ENCODE measurements at regions of chr6 and their contacts with region 1.

Region 1: DNA sequence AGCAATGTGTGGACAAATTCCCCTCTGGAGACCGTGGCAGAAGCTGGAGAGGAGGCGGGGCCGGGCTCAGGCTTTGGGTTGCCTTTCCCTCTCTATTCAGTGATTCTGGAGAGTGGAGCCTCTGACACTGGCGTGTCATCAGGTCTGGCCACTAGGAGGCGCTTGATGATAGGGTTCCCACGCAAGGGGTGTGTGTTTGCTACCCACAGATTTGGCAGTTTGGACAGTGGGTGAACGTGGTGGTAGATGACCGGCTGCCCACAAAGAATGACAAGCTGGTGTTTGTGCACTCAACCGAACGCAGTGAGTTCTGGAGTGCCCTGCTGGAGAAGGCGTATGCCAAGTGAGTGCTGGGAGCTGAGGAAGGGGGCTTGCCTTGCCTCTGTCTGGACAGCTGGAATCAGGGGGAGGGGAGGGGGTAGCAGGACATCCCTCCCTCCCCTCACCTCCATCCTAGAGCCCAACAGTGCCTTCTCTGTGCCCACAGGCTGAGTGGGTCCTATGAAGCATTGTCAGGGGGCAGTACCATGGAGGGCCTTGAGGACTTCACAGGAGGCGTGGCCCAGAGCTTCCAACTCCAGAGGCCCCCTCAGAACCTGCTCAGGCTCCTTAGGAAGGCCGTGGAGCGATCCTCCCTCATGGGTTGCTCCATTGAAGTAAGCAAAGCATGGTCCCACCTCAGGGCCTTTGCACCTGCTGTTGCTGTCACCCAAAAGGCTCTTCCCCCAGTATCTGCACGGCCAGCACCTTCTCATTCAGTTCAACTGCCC is 14.3 kb downstream of the CAPN11 start:
- DNase-seq: no peak
- H3K4me3 ChIP-seq: no peak overlapping the region
- CTCF ChIP-seq: peak; percentile 81

Region 2: GRCh38 chr6:44161997-44162338 is 10.9 kb before region 1 on chr6:
- CTCF ChIA-PET with region 1: interaction called, 49 read pairs
- POLR2A ChIA-PET with region 1: no interaction called
- DNase-seq: no peak
- H3K4me3 ChIP-seq: no peak overlapping the region
- CTCF ChIP-seq: no peak

Region 3: GRCh38 chr6:44192428-44193041 is 19.6 kb after region 1 on chr6:
- CTCF ChIA-PET with region 1: interaction called, 23 read pairs
- POLR2A ChIA-PET with region 1: no interaction called
- DNase-seq: no peak
- H3K4me3 ChIP-seq: no peak overlapping the region
- CTCF ChIP-seq: no peak

Region 4: GRCh38 chr6:44207966-44208365 is 35.0 kb after region 1 on chr6:
- CTCF ChIA-PET with region 1: interaction called, 12 read pairs
- POLR2A ChIA-PET with region 1: no interaction called
- DNase-seq: no peak
- H3K4me3 ChIP-seq: no peak overlapping the region
- CTCF ChIP-seq: no peak

Region 5: DNA sequence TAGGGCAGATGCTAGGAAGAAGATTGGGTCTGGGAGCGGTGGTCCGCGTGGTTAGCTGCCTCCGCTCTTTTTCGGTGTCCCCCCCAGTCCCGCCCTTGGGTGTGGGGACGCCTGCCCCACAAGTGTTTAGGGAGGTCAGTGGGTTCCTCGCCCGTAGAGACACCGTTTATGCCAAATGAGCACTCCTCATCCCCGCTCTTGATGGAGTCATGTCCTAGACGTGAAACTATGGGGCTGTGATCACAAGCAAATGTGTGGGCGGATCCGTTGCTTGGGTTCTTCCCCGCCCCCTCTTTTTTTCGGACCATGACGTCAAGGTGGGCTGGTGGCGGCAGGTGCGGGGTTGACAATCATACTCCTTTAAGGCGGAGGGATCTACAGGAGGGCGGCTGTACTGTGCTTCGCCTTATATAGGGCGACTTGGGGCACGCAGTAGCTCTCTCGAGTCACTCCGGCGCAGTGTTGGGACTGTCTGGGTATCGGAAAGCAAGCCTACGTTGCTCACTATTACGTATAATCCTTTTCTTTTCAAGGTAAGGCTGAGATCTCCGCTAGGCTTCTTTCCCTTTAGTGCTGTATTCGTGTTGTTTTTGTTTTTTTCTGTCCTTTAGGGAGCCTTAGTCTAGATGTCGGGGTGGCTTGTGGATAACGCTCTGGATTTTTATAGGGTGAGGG is 73.9 kb after region 1 on chr6 and contains the start of gene HSP90AB1:
- CTCF ChIA-PET with region 1: interaction called, 10 read pairs
- POLR2A ChIA-PET with region 1: interaction called, 6 read pairs
- DNase-seq: peak; percentile 96
- H3K4me3 ChIP-seq: peak within 1 kb of the TSS; percentile 99
- CTCF ChIP-seq: no peak

Region 6: DNA sequence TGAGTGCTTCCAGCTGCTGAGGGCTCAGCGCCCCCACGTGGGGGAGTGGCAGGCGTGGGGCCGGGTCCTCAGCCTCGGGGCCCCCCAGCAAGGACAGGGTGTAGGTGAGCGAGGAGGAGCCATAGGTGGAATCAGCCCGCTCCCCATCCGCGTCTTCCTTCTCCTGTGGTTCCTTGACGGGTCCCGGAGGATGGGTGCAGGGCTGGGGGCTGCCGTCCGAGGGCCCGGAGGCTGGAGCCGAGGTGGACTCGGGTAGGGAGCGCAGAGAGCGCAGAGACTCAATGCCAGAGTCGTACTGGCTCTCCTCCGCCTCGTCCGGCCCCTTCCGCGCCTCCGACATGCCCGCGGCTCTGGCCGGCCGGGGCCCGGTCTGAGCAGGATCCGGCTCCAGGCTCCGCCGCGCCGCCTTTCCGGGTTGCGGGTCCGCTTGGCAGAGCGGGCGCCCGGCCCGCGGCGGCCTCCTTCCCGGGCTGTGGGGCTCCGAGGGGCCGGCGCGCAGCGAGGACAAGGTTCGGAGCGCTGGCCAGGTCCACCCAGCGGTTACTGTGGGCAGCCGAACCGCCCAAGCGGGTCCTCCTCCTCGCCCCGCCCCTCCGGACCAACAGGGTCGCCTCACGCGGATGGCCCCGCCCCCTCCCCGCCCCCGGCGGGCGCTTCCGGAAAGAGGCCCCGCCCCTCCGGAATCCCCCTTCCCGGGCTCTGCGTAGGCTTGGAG is 92.2 kb after region 1 on chr6 and contains the start of gene NFKBIE:
- CTCF ChIA-PET with region 1: interaction called, 14 read pairs
- POLR2A ChIA-PET with region 1: no interaction called
- DNase-seq: peak; percentile 50
- H3K4me3 ChIP-seq: peak within 1 kb of the TSS; percentile 80
- CTCF ChIP-seq: peak; percentile 26

Region 7: DNA sequence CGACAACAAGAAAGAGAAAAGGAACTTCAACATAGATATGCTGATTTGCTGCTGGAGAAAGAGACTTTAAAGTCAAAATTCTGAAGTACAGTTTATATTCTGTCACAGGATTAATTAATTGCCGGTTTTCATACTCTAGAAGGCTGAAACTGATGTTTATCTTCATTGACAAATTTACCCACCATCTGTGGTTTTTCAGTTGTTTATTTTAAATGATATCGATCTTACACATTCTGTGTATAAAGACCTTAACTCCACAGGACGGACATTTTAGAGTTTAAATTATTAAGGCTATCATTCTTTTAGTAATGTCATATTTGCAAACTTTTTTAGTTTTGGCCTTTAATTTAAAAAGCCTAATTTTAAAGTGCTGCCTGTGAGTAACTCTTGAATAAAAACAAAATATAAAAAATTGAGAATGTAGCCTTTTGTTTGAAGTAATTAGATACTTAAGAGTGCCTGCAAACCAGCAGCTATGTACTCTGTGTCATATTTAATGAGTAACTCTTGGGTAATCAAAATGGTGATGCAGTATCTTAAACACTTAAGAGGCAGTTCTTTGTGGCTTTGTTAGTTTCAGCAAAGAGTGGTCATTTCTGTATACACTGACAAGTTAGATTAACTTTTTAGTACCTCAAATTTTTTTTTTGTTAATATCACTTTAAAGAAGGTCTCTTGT is 273.9 kb after region 1 on chr6:
- CTCF ChIA-PET with region 1: no interaction called
- POLR2A ChIA-PET with region 1: no interaction called
- DNase-seq: peak; percentile 69
- H3K4me3 ChIP-seq: no peak overlapping the region
- CTCF ChIP-seq: no peak

Region 8: GRCh38 chr6:45226081-45226480 is 1053.2 kb after region 1 on chr6:
- CTCF ChIA-PET with region 1: no interaction called
- POLR2A ChIA-PET with region 1: no interaction called
- DNase-seq: no peak
- H3K4me3 ChIP-seq: no peak overlapping the region
- CTCF ChIP-seq: no peak